ENCODE measurements at regions of chr5 and their contacts with region 1.

Region 1: DNA sequence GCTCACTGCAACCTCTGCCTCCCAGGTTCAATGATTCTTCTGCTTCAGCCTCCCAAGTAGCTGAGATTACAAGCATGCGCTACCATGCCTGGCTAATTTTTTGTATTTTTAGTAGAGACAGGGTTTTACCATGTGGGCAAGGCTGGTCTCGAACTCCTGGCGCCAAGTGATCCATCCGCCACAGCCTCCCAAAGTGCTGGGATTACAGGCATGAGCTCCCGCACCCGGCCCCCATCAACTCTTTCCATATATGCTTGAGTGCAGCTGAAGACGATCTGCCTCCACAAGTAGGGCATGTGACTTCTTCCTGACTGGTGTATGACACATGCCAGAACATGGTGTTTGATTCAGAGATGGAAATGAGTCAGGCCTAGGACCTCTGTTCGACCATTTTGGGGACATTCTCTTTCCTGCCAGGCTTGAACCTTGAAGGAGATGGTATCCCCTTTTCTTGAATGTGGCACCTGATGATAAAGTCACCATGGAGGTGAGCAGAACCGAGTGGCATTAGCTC is 7.5 kb upstream of the CNOT6 start:
- DNase-seq: no peak
- ATAC-seq: no peak
- H3K4me3 Mint-ChIP-seq: no peak overlapping the region
- H3K27ac Mint-ChIP-seq: no peak overlapping the region
- H3K4me1 Mint-ChIP-seq: peaks cover 16% of the 10 kb centered on the region
- H3K27me3 Mint-ChIP-seq: no peaks in the 10 kb centered on the region
- CTCF ChIP-seq: no peak

Region 2: GRCh38 chr5:180201051-180201987 is 285.4 kb before region 1 on chr5:
- CTCF ChIA-PET with region 1: interaction called, 15 read pairs
- POLR2A ChIA-PET with region 1: no interaction called
- DNase-seq: peak; percentile 83
- ATAC-seq: peak; percentile 84
- H3K4me3 Mint-ChIP-seq: no peak overlapping the region
- H3K27ac Mint-ChIP-seq: no peak overlapping the region
- H3K4me1 Mint-ChIP-seq: peaks cover 2% of the 10 kb centered on the region; the same call in 1 of the 2 replicates
- H3K27me3 Mint-ChIP-seq: no peaks in the 10 kb centered on the region
- CTCF ChIP-seq: peak; percentile 84

Region 3: DNA sequence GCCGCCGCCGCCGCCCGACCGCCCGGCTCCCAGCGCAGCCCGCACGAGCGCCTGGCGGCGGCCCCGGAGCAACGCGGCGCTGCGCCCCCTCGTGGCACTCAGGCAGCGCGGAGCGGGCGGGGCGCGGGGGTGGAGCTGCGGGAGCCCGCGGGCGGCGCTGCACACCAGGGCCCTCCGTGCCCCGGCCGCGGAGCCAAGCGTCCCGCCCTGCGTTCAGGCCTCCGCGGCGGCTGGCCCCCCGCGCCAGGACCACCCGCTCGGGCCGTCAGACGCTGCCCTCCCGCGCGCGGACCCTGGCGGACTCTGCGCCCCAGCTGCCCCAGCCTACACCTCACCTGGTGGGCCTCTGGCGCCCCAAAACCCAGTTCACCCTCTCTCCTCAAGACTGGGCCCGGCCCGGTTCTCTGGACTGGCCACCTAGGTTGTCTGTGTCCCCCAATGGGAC is 277.5 kb before region 1 on chr5 and contains the start of gene RASGEF1C:
- CTCF ChIA-PET with region 1: interaction called, 12 read pairs
- POLR2A ChIA-PET with region 1: no interaction called
- DNase-seq: peak; percentile 71
- ATAC-seq: peak; percentile 82
- H3K4me3 Mint-ChIP-seq: peak within 1 kb of the TSS; percentile 72
- H3K27ac Mint-ChIP-seq: no peak within 1 kb of the TSS
- H3K4me1 Mint-ChIP-seq: peaks cover 10% of the 10 kb centered on the region
- H3K27me3 Mint-ChIP-seq: peaks cover 35% of the 10 kb centered on the region
- CTCF ChIP-seq: 0 out of 2 replicates have a peak, but pooled peaks have one; percentile 13
- total RNA-seq, gene RASGEF1C: 0.44 to 0.96 TPM (median 0.82 TPM) in 3 replicates

Region 4: GRCh38 chr5:180291943-180292831 is 194.5 kb before region 1 on chr5 and contains the start of gene MAPK9:
- CTCF ChIA-PET with region 1: interaction called, 11 read pairs
- POLR2A ChIA-PET with region 1: interaction called, 3 read pairs
- DNase-seq: peak; percentile 85
- ATAC-seq: peak; percentile 74
- H3K4me3 Mint-ChIP-seq: peak within 1 kb of the TSS; percentile 93
- H3K27ac Mint-ChIP-seq: peak within 1 kb of the TSS; percentile 88
- H3K4me1 Mint-ChIP-seq: peaks cover 64% of the 10 kb centered on the region
- H3K27me3 Mint-ChIP-seq: no peaks in the 10 kb centered on the region
- CTCF ChIP-seq: no peak
- total RNA-seq, gene MAPK9: 42.4 to 42.9 TPM (median 42.9 TPM) in 3 replicates

Measured in WTC11 (cell line).